Gastrocnemius medialis (tissue), 4 donors: ENCODE measurements at regions of chr2 and their contacts with region 1.

Region 1: GRCh38 chr2:231211486-231211885 is 13.1 kb downstream of the ARMC9 start:
- DNase-seq: no peak
- ATAC-seq: peak; percentile 52 to 63
- H3K4me3 ChIP-seq: no peak overlapping the region
- H3K27ac ChIP-seq: peak overlapping the region; percentile 79 to 90 (median 85)
- H3K4me1 ChIP-seq: peaks cover 15 to 20% of the 10 kb centered on the region in 2 donors
- H3K27me3 ChIP-seq: no peaks in the 10 kb centered on the region
- CTCF ChIP-seq: no peak
- POLR2A ChIP-seq: no peak

Region 2: DNA sequence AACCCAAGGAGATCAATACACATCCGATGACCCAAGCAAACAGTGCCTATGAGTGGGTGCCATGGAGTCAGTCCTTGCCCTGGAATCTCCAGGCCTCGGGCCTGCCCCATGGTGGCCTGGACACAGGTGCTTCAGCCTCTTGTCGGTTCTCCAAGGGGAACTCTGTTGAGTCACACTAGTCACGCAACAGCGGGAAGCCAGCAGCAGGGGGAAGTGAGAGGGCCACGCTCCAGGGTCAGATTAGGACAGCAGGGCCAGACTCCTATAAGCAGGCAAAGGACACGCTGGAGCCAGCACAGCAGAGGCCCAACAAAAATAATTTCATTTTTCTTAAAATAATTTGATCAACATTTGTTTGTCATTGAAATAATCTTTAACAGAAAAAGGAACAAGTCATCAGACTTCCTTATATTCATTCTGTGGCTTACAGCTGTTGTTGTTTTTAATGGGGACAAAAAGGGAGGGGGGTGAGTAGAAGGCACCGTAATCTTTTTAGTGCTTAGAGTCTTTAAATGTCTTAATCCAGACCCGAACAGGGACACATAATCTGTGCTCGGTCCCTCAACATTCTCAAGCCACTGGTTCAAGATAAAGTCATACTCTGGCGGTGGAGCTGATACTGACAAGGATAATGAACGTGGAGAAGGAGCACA is 29.5 kb before region 1 on chr2:
- in situ Hi-C with region 1: no loop called
- intact Hi-C with region 1: loop called (anchors 2 kb)
- DNase-seq: peak; percentile 83 to 91
- ATAC-seq: peak; percentile 80 to 89
- H3K4me3 ChIP-seq: no peak overlapping the region
- H3K27ac ChIP-seq: peak overlapping the region; percentile 69 to 87 (median 84)
- H3K4me1 ChIP-seq: peaks cover 12 to 30% of the 10 kb centered on the region in 2 donors
- H3K27me3 ChIP-seq: no peaks in the 10 kb centered on the region
- CTCF ChIP-seq: peak in 1 of 5 experiments; percentile 19
- POLR2A ChIP-seq: no peak

Region 3: DNA sequence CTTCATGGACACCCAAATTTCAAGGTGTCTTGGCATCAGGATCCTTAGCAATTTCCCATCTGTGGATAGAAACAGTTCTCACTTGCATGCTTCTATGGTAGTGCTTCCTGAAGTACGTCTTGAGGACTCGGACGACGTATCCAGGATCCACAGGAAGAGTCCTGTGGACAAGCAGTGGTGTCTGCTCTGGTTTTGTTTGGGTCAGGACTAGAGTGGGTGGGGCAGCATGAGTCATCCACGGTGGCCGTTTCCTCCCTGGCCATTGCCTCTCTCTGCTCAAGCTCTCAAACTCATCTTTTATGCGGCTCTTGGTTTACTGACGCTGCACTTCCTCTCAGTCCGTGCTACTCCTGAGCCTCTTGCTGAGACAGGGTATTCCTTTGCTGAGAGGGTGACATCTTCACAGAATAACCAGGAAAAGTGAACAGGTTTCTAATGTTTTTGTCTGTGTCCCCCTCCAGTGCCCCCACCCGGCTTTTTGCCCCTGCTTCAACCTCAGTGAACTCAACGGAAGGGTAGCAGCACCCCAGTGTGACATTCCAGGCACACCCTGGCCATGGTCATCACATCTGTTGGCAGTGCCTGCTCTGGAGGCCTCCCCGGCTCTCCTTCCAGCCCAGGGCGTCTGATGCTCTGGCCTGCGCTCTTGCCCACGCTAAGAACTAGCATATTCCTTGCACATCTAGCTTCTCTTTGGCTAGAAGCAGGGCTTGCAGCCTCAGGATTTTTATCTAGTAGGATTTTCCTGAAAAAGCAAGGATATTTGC is 49.1 kb after region 1 on chr2:
- in situ Hi-C with region 1: no loop called
- intact Hi-C with region 1: no loop called
- DNase-seq: peak in 1 of 2 donors; percentile 16
- ATAC-seq: no peak
- H3K4me3 ChIP-seq: no peak overlapping the region
- H3K27ac ChIP-seq: no peak overlapping the region
- H3K4me1 ChIP-seq: no peaks in the 10 kb centered on the region
- H3K27me3 ChIP-seq: no peaks in the 10 kb centered on the region
- CTCF ChIP-seq: no peak
- POLR2A ChIP-seq: no peak